Posterior vena cava (tissue), 2 donors: ENCODE measurements at regions of chr7 and their contacts with region 1.

Region 1: DNA sequence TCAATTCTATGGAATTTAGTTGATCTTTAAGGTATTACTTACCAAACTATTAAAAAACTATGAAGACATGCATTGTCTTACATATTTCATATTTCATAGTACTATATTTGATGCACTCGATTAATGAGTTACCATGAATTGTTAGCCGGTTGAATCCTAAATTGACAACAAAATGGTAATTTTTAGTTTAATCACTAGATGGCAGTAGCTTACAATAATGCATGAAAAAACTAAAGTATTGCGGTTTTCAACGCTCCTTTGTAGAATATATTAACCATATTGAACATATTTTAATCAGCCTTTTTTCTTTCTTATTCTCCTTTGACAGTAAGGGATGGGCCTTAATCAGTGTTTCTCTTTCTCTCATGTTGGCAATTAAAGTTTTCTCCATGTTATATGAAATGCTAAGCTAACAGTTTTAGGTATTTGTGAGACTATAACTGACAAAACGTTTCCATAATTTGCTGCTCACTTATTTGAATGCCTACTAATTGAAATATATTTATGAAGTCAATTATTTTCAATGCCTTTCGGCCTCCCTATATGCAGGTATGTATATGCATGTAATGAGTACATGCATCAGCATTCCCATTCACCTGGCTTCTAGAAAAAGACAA is 48.5 kb upstream of the ARL4A start:
- DNase-seq: no peak

Region 2: DNA sequence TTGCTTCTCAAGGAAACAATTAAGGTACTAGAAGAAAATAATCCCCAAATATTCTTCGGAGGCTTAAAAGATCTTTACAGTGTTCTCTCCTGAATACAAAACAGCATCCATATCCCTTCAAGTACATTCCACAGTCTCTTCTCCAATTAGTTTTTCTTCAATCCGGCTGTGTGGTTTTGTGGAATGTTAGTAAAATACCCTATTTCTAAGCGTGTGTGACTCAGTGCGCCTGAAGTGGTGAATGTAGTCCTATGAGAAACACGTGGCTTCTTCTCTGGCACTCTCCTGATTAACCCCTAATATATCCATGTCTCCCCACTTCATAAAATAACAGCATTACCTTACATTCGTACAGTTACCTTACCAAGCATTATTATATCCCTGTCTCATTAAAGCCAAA is 618.7 kb after region 1 on chr7:
- intact Hi-C with region 1: loop called in 1 of 2 experiments (anchors 2 kb)
- DNase-seq: no peak

Region 3: GRCh38 chr7:13262929-13263530 is 624.1 kb after region 1 on chr7:
- intact Hi-C with region 1: loop called (anchors 2 to 5 kb)
- DNase-seq: no peak